Heart left ventricle (tissue), 16 donors: ENCODE measurements at regions of chr3 and their contacts with region 1.

Region 1: GRCh38 chr3:120417272-120417911 is 33.4 kb downstream of the FSTL1 start:
- DNase-seq: peak; percentile 88 to 94 (median 93)
- ATAC-seq: peak; percentile 34 to 73 (median 60)
- H3K4me3 ChIP-seq: peak overlapping the region in 9 of 12 donors; percentile 10 to 47 (median 32)
- H3K27ac ChIP-seq: peak overlapping the region; percentile 65 to 92 (median 86)
- H3K4me1 ChIP-seq: peaks cover 16 to 79% (median 62%) of the 10 kb centered on the region in 12 donors
- H3K27me3 ChIP-seq: no peaks in the 10 kb centered on the region
- CTCF ChIP-seq: peak; percentile 84 to 95 (median 88)
- POLR2A ChIP-seq: peak in 1 of 2 donors; percentile 48

Region 2: GRCh38 chr3:120095226-120095978 is 322.0 kb before region 1 on chr3:
- intact Hi-C with region 1: loop called in 4 of 10 experiments (anchors 5 to 10 kb)
- DNase-seq: peak; percentile 90 to 94 (median 93)
- ATAC-seq: peak; percentile 52 to 71 (median 68)
- H3K4me3 ChIP-seq: peak overlapping the region; percentile 53 to 96 (median 75)
- H3K27ac ChIP-seq: peak overlapping the region; percentile 95 to 100 (median 99)
- H3K4me1 ChIP-seq: peaks cover 9 to 31% (median 23%) of the 10 kb centered on the region in 12 donors
- H3K27me3 ChIP-seq: no peaks in the 10 kb centered on the region
- CTCF ChIP-seq: no peak
- POLR2A ChIP-seq: peak; percentile 64 to 90

Region 3: GRCh38 chr3:120245386-120245785 is 172.0 kb before region 1 on chr3:
- intact Hi-C with region 1: loop called in 9 of 10 experiments (anchors 1 to 5 kb)
- DNase-seq: no peak
- ATAC-seq: no peak
- H3K4me3 ChIP-seq: no peak overlapping the region
- H3K27ac ChIP-seq: no peak overlapping the region
- H3K4me1 ChIP-seq: no peaks in the 10 kb centered on the region
- H3K27me3 ChIP-seq: peaks cover 0 to 8% (median 0%) of the 10 kb centered on the region in 9 donors
- CTCF ChIP-seq: no peak
- POLR2A ChIP-seq: no peak

Region 4: GRCh38 chr3:120450600-120451271 is 33.3 kb after region 1 on chr3 and contains the start of gene FSTL1:
- intact Hi-C with region 1: loop called in 3 of 10 experiments (anchors 2 to 5 kb)
- DNase-seq: peak; percentile 77 to 84 (median 82)
- ATAC-seq: peak; percentile 66 to 83 (median 78)
- H3K4me3 ChIP-seq: peak within 1 kb of the TSS; percentile 68 to 99 (median 90)
- H3K27ac ChIP-seq: peak within 1 kb of the TSS; percentile 91 to 98 (median 94)
- H3K4me1 ChIP-seq: peaks cover 0 to 45% (median 35%) of the 10 kb centered on the region in 12 donors
- H3K27me3 ChIP-seq: peaks cover 0 to 27% (median 0%) of the 10 kb centered on the region in 9 donors
- CTCF ChIP-seq: no peak
- POLR2A ChIP-seq: peak in 1 of 2 donors; percentile 83
- total RNA-seq, gene FSTL1: 138 to 667 (median 220) TPM

Region 5: DNA sequence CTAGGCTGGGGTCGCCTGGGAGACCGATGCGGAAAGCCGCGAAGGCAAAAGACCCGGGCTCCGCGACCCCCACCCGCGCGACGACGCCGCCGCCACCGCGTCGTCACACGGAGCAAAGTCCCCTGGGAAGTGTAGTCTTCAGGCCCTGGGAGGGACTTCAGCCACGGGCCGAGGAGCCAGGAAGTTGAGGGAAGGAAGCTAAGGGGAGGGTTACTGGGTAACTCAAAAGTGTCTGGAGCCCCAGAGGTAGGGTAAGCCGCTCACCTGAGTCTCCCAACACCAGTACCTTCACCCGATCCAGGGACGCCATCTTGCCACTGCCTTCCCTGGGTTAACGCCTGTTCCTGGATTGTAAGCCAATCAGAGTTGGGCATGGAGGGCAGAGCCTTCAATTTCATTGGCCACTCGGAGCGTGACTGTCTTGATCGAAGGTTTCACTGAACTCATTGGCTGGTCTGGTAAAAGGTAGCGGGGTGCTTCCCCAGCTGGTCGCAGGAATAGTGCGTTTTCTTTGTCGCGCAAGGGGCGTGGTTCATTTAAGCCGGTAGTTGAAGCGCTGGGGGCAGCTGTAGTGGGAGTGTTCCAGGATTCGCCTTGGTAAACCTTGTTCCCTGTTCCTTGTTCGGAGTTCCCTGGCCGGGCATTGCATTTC is 324.9 kb after region 1 on chr3 and contains the starts of genes GTF2E1 and RABL3:
- intact Hi-C with region 1: loop called in 1 of 10 experiments (anchors 5 kb)
- DNase-seq: peak; percentile 95 to 98 (median 97)
- ATAC-seq: peak; percentile 100
- H3K4me3 ChIP-seq: peak within 1 kb of the TSS; percentile 59 to 97 (median 85)
- H3K27ac ChIP-seq: peak within 1 kb of the TSS; percentile 83 to 98 (median 93)
- H3K4me1 ChIP-seq: peaks cover 0 to 29% (median 17%) of the 10 kb centered on the region in 12 donors
- H3K27me3 ChIP-seq: no peaks in the 10 kb centered on the region
- CTCF ChIP-seq: no peak
- POLR2A ChIP-seq: peak in 1 of 2 donors; percentile 64
- total RNA-seq, gene GTF2E1: 7.3 to 15.1 (median 12.2) TPM
- total RNA-seq, gene RABL3: 6.8 to 28.3 (median 17.5) TPM